ENCODE measurements at regions of chr7 and their contacts with region 1.

Region 1: GRCh38 chr7:76020031-76020714 is 25.8 kb upstream of the TMEM120A start:
- DNase-seq: peak; percentile 79
- ATAC-seq: peak; percentile 74
- H3K4me3 Mint-ChIP-seq: peak overlapping the region; percentile 34
- H3K27ac Mint-ChIP-seq: no peak overlapping the region
- H3K4me1 Mint-ChIP-seq: peaks cover 21% of the 10 kb centered on the region
- H3K27me3 Mint-ChIP-seq: no peaks in the 10 kb centered on the region

Region 2: DNA sequence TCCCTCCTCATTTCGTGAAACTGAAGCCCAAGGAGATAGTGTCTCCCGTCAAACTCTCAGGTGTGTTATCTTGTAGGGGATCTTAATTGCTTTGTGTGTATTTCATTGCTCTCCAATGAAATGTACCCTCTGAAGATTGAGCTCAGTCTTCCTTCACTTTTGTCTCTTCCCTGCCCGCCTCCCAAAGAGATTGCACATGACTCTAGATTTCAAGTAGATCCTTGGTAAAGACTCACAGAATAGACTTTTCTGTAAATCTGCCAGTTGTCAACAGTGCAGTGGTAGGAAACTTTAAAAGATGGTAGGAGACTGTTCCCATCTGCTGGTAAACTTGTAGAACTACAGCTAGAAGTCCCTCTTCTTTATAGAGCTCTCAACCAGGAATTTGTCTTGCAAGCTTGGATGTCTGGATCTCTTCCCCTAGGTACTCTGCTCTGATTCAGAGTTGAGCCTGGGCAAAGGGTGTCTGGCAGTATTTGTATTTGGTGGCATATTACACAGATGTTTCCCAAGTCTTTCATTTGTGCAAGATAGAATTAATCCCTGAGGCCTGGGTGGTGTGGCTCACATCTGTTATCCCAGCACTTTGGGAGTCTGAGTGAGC is 257.8 kb before region 1 on chr7:
- CTCF ChIA-PET with region 1: interaction called, 18 read pairs
- POLR2A ChIA-PET with region 1: no interaction called
- DNase-seq: no peak
- ATAC-seq: peak; percentile 86
- H3K4me3 Mint-ChIP-seq: no peak overlapping the region
- H3K27ac Mint-ChIP-seq: no peak overlapping the region
- H3K4me1 Mint-ChIP-seq: peaks cover 3% of the 10 kb centered on the region
- H3K27me3 Mint-ChIP-seq: no peaks in the 10 kb centered on the region

Region 3: DNA sequence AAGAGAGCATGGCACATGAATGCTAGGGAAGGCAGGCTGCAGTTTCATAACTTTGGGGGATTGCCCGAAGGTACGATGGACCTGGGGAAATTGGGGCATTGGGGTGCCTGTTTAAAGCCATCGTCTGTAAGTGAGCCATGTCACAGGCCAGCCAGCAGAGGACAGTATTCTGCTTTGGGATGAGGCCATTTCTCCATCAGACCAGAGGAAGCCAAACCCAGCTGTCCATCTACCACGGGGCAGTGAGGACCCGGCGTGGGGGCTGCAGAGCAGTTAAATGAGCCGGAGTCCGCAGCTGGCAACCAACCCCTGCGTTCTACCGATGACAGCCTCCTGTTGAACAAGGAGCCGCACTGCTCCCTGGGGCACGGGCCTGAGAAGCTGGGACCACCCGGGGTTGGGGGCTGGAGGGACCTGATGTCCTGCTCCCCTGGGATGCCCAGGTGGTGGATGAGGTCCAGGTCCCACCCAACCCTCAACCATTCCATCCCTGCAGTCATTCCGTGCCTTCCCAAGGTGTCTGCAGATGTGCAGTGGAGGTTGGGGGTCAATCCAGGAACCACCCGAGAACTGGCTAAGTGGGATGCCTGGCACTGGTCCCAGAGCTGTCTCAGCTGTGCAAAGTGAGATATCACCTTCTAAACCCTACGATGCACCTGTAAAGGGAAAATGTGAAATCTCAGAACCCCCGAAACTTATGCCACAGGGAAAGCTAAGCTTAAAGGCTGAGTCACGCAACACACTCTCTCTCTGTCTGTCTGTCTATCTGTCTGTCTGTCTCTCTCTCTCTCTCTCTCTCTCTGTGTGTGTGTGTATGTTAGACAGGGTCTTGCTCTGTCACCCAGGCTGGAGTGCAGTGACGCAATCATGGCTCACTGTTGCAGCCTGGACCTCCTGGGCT is 153.4 kb before region 1 on chr7:
- CTCF ChIA-PET with region 1: interaction called, 57 read pairs
- POLR2A ChIA-PET with region 1: no interaction called
- DNase-seq: peak; percentile 62
- ATAC-seq: peak; percentile 80
- H3K4me3 Mint-ChIP-seq: no peak overlapping the region
- H3K27ac Mint-ChIP-seq: no peak overlapping the region
- H3K4me1 Mint-ChIP-seq: peaks cover 6% of the 10 kb centered on the region
- H3K27me3 Mint-ChIP-seq: peaks cover 4% of the 10 kb centered on the region

Region 4: DNA sequence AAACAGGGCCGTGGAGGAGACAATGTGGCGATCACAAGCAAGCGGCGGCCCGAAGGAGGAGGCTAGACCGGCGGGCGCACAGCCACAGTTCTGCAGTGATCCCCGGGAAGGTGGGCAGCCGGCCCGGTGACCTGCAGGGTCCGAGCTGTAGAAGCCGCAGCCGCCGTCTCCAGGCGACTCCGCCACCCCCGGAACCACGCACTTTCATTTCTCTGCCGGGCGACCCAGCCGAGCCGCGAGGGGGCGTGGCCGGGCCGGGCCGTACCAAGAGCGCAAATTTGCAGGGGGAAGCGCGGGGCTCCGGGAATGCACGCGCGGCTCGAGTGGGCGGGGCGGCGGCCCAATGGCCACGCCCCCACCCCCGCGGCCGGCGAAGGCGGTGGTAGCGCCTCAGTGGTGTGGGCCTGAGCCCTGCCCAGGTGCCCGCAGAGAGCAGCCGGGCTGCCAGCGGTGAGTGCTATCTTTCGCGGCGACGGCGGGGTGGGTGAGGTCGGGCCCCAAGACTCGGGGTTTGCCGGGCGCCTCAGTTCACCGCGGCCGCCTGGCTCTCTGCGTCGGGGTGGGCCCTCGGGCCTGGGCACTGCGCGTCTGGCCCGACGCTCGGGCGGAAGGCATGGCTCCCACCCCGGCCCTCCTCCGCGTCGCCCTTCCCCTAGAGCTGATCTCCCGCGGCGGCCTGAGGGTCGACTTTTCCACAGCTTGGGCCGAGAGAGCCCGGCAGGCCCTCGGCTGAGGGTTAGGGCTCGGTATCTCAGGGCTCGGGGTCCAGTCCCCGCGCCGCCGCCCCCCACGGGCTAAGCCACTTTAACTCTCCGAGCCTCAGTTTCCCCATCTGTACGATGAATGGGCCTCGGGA is 105.2 kb before region 1 on chr7 and contains the start of gene POR:
- CTCF ChIA-PET with region 1: interaction called, 16 read pairs
- POLR2A ChIA-PET with region 1: no interaction called
- DNase-seq: peak; percentile 96
- ATAC-seq: peak; percentile 92
- H3K4me3 Mint-ChIP-seq: peak within 1 kb of the TSS; percentile 85
- H3K27ac Mint-ChIP-seq: peak within 1 kb of the TSS; percentile 91
- H3K4me1 Mint-ChIP-seq: peaks cover 20% of the 10 kb centered on the region
- H3K27me3 Mint-ChIP-seq: peaks cover 8% of the 10 kb centered on the region
- total RNA-seq, gene POR: 31.8 to 32.2 TPM

Region 5: GRCh38 chr7:75989500-75990388 is 30.4 kb before region 1 on chr7:
- CTCF ChIA-PET with region 1: interaction called, 13 read pairs
- POLR2A ChIA-PET with region 1: no interaction called
- DNase-seq: no peak
- ATAC-seq: no peak
- H3K4me3 Mint-ChIP-seq: no peak overlapping the region
- H3K27ac Mint-ChIP-seq: no peak overlapping the region
- H3K4me1 Mint-ChIP-seq: peaks cover 6% of the 10 kb centered on the region
- H3K27me3 Mint-ChIP-seq: no peaks in the 10 kb centered on the region

Region 6: DNA sequence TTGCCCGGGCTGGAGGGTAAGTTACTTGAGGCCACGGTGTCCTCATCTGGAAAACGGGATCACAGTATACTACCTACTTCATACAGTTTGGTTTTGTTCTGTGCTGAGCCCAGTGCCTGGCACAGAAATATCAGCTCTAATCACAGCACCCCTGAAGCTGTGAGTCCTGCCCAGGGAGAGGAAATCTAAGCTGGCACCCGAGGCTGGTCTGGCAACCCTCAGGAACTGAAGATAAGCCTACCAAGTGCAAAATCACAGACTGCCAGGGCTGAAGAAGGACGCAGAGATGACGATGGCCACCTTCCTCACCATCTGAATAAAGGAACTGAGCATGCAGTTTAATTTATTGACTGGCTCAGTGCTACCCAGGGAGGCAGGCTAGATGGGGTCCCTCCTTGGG is 18.0 kb before region 1 on chr7:
- CTCF ChIA-PET with region 1: interaction called, 15 read pairs
- POLR2A ChIA-PET with region 1: interaction called, 4 read pairs
- DNase-seq: no peak
- ATAC-seq: no peak
- H3K4me3 Mint-ChIP-seq: no peak overlapping the region
- H3K27ac Mint-ChIP-seq: no peak overlapping the region
- H3K4me1 Mint-ChIP-seq: peaks cover 6% of the 10 kb centered on the region
- H3K27me3 Mint-ChIP-seq: no peaks in the 10 kb centered on the region

Region 7: DNA sequence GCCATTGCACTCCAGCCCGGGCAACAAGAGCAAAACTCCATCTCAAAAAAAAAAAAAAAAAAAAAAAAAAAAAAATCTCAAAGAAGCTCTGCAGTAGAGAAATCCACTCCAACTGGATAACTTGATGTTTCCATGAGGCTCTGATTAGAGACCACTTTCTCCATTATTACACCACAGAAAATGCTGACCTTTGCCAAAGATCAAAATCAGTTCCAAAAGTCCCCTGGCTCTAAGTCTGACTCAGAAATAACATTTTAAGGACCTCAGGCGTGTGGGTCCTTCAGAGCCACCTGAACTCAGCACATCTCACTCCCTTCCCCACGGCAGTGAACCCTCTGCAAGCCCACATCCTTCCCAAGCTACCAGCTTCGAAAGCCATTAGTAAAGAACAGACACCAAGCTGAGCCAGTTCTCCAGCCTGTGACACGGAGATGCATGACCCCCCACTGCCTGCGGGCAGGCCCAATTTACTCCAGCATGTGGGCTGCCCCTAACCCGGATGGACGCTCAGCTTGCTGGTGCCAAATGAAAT is 12.0 kb before region 1 on chr7:
- CTCF ChIA-PET with region 1: interaction called, 30 read pairs
- POLR2A ChIA-PET with region 1: interaction called, 4 read pairs
- DNase-seq: peak; percentile 55
- ATAC-seq: peak; percentile 69
- H3K4me3 Mint-ChIP-seq: no peak overlapping the region
- H3K27ac Mint-ChIP-seq: peak overlapping the region; percentile 3
- H3K4me1 Mint-ChIP-seq: peaks cover 24% of the 10 kb centered on the region
- H3K27me3 Mint-ChIP-seq: peaks cover 9% of the 10 kb centered on the region

Region 8: DNA sequence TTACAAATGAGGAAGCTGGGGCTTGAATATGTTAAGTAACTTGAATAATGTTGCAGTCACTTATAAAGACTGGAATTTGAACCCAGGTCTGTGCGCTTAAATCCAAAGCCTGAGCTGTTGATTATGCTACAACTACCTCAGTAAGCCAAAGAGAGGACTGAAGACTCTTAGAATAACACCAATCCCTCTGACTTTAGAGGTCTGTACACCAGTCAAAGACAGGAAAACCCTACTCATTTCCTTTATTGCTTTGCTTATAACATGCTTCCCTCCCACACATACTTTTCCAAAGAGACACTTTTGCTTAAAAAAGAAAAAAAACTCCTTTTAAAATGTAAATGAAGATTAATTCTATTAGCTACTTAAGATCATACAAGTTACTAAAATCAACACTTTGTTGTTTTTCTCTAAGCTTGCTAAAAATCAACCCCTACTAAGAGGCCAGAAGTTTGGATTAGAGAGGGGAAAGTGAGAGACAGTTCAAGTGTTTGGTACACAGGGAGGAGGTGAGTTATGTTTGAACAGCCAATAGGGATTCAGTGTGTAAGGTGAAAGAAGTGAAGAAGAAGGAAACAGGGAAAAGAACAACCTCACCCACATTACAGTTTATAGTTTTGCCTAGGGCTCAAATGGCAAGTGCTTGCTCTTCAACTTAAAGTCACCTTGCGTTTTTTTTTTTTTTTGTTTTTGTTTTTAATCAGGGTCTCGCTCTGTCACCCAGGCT is 102.5 kb after region 1 on chr7:
- CTCF ChIA-PET with region 1: no interaction called
- POLR2A ChIA-PET with region 1: no interaction called
- DNase-seq: no peak
- ATAC-seq: no peak
- H3K4me3 Mint-ChIP-seq: no peak overlapping the region
- H3K27ac Mint-ChIP-seq: no peak overlapping the region
- H3K4me1 Mint-ChIP-seq: peaks cover 7% of the 10 kb centered on the region
- H3K27me3 Mint-ChIP-seq: peaks cover 3% of the 10 kb centered on the region

Measured in activated CD8-positive, alpha-beta T cell treated with anti-CD3 and anti-CD28 coated beads, Interleukin-2, amount 10 ng/mL, durations not matched to agents 7 days and 5 days (primary cell).